PC-9 (cell line): ENCODE measurements at regions of chr15 and their contacts with region 1.

Region 1: DNA sequence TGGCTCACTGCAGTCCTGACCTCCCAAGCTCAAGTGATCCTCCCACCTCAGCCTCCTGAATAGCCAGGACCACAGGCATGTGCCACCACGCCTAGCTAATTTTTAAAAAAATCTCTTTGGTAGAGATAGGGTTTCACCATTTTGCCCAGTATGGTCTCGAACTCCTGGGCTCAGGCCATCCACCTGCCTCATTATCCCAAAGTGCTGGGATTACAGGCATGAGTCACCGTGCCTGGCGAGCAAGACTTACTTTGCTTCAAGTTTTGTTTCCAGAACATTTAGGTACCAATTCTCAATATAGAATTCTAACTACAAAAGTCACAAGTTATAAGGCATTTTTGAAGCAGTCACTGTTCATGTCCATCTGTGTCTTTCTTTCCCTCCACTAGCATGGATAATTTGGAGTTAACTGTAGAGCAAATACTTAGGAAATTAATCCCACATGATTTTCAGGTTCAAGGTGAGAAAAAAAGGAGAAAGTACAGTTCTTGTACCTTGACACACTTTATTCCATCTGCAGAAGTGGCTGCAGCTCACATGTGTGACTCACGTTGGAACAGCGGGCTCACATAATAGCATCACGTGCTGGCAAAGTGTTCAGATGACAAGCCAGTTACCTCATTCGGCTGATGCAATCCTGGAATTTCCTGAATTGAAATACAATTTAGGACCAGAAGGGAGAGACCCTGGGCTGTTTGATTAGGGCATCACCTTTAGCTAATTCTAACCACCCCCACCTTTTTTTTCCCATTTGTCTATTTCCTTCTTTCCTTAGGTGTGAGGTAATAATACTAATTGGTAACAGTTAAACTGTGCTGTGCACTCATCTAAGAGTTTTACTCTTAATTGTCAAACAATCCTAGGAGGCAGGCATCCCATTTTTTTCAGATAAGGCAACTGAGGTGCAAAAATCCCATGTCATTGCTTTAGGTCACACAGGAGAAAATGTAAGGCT is 46.9 kb upstream of the NEDD4 start:
- DNase-seq: peak; percentile 70 to 86
- H3K4me3 ChIP-seq: no peak overlapping the region
- H3K27ac ChIP-seq: peak overlapping the region; percentile 96
- H3K4me1 ChIP-seq: peaks cover 57% of the 10 kb centered on the region
- H3K27me3 ChIP-seq: no peaks in the 10 kb centered on the region
- CTCF ChIP-seq: no peak

Region 2: GRCh38 chr15:55999636-56000035 is 40.7 kb before region 1 on chr15:
- CTCF ChIA-PET with region 1: no interaction called
- POLR2A ChIA-PET with region 1: interaction called, 6 read pairs
- intact Hi-C with region 1: loop called (anchors 2 kb)
- DNase-seq: peak; percentile 29 to 65
- H3K4me3 ChIP-seq: no peak overlapping the region
- H3K27ac ChIP-seq: peak overlapping the region; percentile 54; the same call in 1 of the 2 replicates
- H3K4me1 ChIP-seq: peaks cover 61% of the 10 kb centered on the region
- H3K27me3 ChIP-seq: no peaks in the 10 kb centered on the region
- CTCF ChIP-seq: no peak